Caco-2 (cell line): ENCODE measurements at regions of chr6 and their contacts with region 1.

Region 1: GRCh38 chr6:134609716-134610261 is 291.9 kb upstream of the SGK1 start:
- DNase-seq: no peak
- H3K4me3 ChIP-seq: no peak overlapping the region
- H3K4me3 Mint-ChIP-seq: no peak overlapping the region
- H3K27ac Mint-ChIP-seq: no peak overlapping the region
- H3K4me1 ChIP-seq: no peaks in the 10 kb centered on the region
- H3K4me1 Mint-ChIP-seq: no peaks in the 10 kb centered on the region
- H3K27me3 ChIP-seq: no peaks in the 10 kb centered on the region
- H3K27me3 Mint-ChIP-seq: no peaks in the 10 kb centered on the region
- CTCF ChIP-seq: no peak

Region 2: GRCh38 chr6:134640975-134641429 is 31.2 kb after region 1 on chr6:
- CTCF ChIA-PET with region 1: no interaction called
- POLR2A ChIA-PET with region 1: no interaction called
- intact Hi-C with region 1: no loop called
- DNase-seq: peak; percentile 71 to 78
- H3K4me3 ChIP-seq: no peak overlapping the region
- H3K4me3 Mint-ChIP-seq: no peak overlapping the region
- H3K27ac Mint-ChIP-seq: peak overlapping the region; percentile 56
- H3K4me1 ChIP-seq: peaks cover 37% of the 10 kb centered on the region
- H3K4me1 Mint-ChIP-seq: peaks cover 34% of the 10 kb centered on the region
- H3K27me3 ChIP-seq: no peaks in the 10 kb centered on the region
- H3K27me3 Mint-ChIP-seq: no peaks in the 10 kb centered on the region
- CTCF ChIP-seq: peak; percentile 76 to 82

Region 3: GRCh38 chr6:134657751-134658522 is 48.1 kb after region 1 on chr6:
- CTCF ChIA-PET with region 1: no interaction called
- POLR2A ChIA-PET with region 1: no interaction called
- intact Hi-C with region 1: no loop called
- DNase-seq: no peak
- H3K4me3 ChIP-seq: no peak overlapping the region
- H3K4me3 Mint-ChIP-seq: no peak overlapping the region
- H3K27ac Mint-ChIP-seq: no peak overlapping the region
- H3K4me1 ChIP-seq: peaks cover 29% of the 10 kb centered on the region
- H3K4me1 Mint-ChIP-seq: peaks cover 13% of the 10 kb centered on the region
- H3K27me3 ChIP-seq: no peaks in the 10 kb centered on the region
- H3K27me3 Mint-ChIP-seq: no peaks in the 10 kb centered on the region
- CTCF ChIP-seq: no peak

Region 4: GRCh38 chr6:134691180-134691579 is 81.4 kb after region 1 on chr6:
- CTCF ChIA-PET with region 1: interaction called, 10 read pairs
- POLR2A ChIA-PET with region 1: no interaction called
- intact Hi-C with region 1: no loop called
- DNase-seq: no peak
- H3K4me3 ChIP-seq: no peak overlapping the region
- H3K4me3 Mint-ChIP-seq: no peak overlapping the region
- H3K27ac Mint-ChIP-seq: no peak overlapping the region
- H3K4me1 ChIP-seq: no peaks in the 10 kb centered on the region
- H3K4me1 Mint-ChIP-seq: no peaks in the 10 kb centered on the region
- H3K27me3 ChIP-seq: no peaks in the 10 kb centered on the region
- H3K27me3 Mint-ChIP-seq: no peaks in the 10 kb centered on the region
- CTCF ChIP-seq: no peak